ENCODE measurements at regions of chr6 and their contacts with region 1.

Region 1: GRCh38 chr6:11968241-11968806 is 43.8 kb upstream of the HIVEP1 start:
- DNase-seq: no peak
- ATAC-seq: no peak
- H3K4me3 ChIP-seq: no peak overlapping the region
- H3K4me3 Mint-ChIP-seq: no peak overlapping the region
- H3K27ac ChIP-seq: no peak overlapping the region
- H3K27ac Mint-ChIP-seq: no peak overlapping the region
- H3K4me1 ChIP-seq: no peaks in the 10 kb centered on the region
- H3K4me1 Mint-ChIP-seq: peaks cover 0 to 3% (median 0%) of the 10 kb centered on the region in 3 donors
- H3K27me3 ChIP-seq: no peaks in the 10 kb centered on the region
- H3K27me3 Mint-ChIP-seq: peaks cover 0 to 2% of the 10 kb centered on the region in 2 donors

Region 2: DNA sequence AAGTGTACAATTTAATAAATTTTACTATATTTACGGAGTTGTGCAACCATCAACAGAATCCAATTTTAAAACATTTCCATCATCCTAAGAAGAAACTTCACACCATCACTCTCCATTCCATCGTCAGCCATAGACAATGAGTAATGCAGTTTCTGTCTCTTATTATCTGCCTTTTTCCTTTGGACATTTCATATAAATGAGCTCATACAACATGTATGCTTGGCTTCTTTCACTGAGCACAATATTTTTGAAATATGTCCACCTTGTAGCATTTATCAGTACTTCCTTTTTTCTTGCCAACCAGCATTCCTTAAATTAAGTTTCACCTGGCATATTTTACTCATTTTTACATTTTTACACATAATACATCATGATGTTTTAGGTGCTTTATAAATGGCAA is 21.1 kb after region 1 on chr6:
- CTCF ChIA-PET with region 1: interaction called, 4 to 13 read pairs
- POLR2A ChIA-PET with region 1: no interaction called
- DNase-seq: no peak
- ATAC-seq: no peak
- H3K4me3 ChIP-seq: no peak overlapping the region
- H3K4me3 Mint-ChIP-seq: no peak overlapping the region
- H3K27ac ChIP-seq: no peak overlapping the region
- H3K27ac Mint-ChIP-seq: no peak overlapping the region
- H3K4me1 ChIP-seq: no peaks in the 10 kb centered on the region
- H3K4me1 Mint-ChIP-seq: no peaks in the 10 kb centered on the region
- H3K27me3 ChIP-seq: peaks cover 0 to 7% of the 10 kb centered on the region in 2 experiments
- H3K27me3 Mint-ChIP-seq: peaks cover 0 to 3% of the 10 kb centered on the region in 2 donors